ENCODE measurements at regions of chr19 and their contacts with region 1.

Region 1: DNA sequence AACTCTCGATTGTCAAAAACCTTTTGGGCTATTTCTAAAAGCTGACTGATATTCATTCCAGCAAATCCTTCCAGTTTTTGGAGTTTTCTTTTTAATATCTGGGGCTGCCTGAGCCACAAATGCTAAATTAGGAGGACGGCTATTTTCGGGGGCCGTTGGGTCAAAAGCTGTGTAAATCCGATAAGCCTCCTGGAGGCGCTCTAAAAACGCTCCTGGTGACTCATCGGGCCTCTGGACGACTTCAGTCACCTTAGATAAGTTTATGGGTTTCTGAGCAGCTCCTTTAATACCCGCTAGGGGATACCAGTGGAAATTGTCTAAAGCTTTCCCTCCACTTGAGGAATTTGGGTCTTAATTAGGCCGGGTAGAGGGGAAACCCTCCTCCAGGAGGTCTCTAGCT is 66.4 kb downstream of the ZNF730 start:
- DNase-seq: no peak
- ATAC-seq: no peak
- H3K4me3 ChIP-seq: no peak overlapping the region
- H3K4me3 Mint-ChIP-seq: no peak overlapping the region
- H3K27ac ChIP-seq: no peak overlapping the region
- H3K27ac Mint-ChIP-seq: no peak overlapping the region
- H3K4me1 ChIP-seq: no peaks in the 10 kb centered on the region
- H3K4me1 Mint-ChIP-seq: no peaks in the 10 kb centered on the region
- H3K27me3 ChIP-seq: no peaks in the 10 kb centered on the region
- H3K27me3 Mint-ChIP-seq: no peaks in the 10 kb centered on the region

Region 2: GRCh38 chr19:23054426-23054825 is 128.8 kb before region 1 on chr19:
- CTCF ChIA-PET with region 1: no interaction called
- POLR2A ChIA-PET with region 1: no interaction called
- intact Hi-C with region 1: no loop called
- DNase-seq: no peak
- ATAC-seq: no peak
- H3K4me3 ChIP-seq: no peak overlapping the region
- H3K4me3 Mint-ChIP-seq: no peak overlapping the region
- H3K27ac ChIP-seq: no peak overlapping the region
- H3K27ac Mint-ChIP-seq: no peak overlapping the region
- H3K4me1 ChIP-seq: no peaks in the 10 kb centered on the region
- H3K4me1 Mint-ChIP-seq: no peaks in the 10 kb centered on the region
- H3K27me3 ChIP-seq: no peaks in the 10 kb centered on the region
- H3K27me3 Mint-ChIP-seq: no peaks in the 10 kb centered on the region

Region 3: DNA sequence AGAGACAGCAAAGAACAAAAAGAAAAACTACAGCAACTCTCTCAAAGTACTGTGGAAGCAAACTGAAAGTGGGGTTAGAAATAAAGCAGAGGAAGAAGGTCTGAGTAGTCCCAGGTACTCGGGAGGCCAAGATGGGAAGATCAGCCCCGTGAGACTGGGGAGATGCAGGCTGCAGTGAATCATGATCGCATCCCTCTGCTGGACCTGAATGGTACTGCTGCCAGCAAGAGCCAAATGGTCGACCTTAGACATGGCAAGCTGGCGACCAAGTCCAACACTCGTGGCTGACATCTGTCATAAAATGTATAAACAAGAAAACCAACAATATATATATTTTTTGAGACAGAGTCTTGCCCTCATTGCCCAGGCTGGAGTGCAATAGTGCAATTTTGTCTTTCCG is 100.7 kb after region 1 on chr19:
- CTCF ChIA-PET with region 1: no interaction called
- POLR2A ChIA-PET with region 1: no interaction called
- intact Hi-C with region 1: loop called in 1 of 2 experiments (anchors 1 kb)
- DNase-seq: peak; percentile 26 to 60 (median 42)
- ATAC-seq: peak; percentile 91
- H3K4me3 ChIP-seq: no peak overlapping the region
- H3K4me3 Mint-ChIP-seq: peak overlapping the region in 6 of 10 donors; percentile 2 to 61 (median 30)
- H3K27ac ChIP-seq: no peak overlapping the region
- H3K27ac Mint-ChIP-seq: peak overlapping the region in 2 of 9 donors; percentile 38 to 60
- H3K4me1 ChIP-seq: no peaks in the 10 kb centered on the region
- H3K4me1 Mint-ChIP-seq: peaks cover 3 to 35% (median 25%) of the 10 kb centered on the region in 7 donors
- H3K27me3 ChIP-seq: no peaks in the 10 kb centered on the region
- H3K27me3 Mint-ChIP-seq: peaks cover 0 to 4% (median 0%) of the 10 kb centered on the region in 5 donors

Region 4: DNA sequence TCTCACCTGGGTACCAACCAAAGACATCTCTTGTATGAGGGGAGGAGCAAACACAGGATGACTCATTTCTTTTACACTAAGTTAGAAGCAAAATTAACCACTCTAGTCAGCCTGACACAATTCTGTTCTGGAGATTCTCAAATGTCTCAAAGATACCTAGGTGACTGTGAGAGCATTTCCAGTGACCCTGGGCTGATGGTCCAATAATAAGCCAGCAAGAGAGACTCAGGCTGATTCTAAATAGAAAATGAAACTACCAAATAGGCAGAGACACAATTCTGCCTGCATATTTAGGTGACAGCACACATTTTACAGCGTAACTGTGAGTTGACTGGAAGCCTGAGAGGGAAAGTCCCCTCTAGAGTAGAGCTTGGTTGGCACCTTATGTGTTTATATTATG is 195.7 kb after region 1 on chr19:
- CTCF ChIA-PET with region 1: no interaction called
- POLR2A ChIA-PET with region 1: no interaction called
- intact Hi-C with region 1: no loop called
- DNase-seq: no peak
- ATAC-seq: peak; percentile 46
- H3K4me3 ChIP-seq: no peak overlapping the region
- H3K4me3 Mint-ChIP-seq: peak overlapping the region in 1 of 10 donors; percentile 57
- H3K27ac ChIP-seq: no peak overlapping the region
- H3K27ac Mint-ChIP-seq: no peak overlapping the region
- H3K4me1 ChIP-seq: peaks cover 0 to 5% of the 10 kb centered on the region in 2 donors
- H3K4me1 Mint-ChIP-seq: peaks cover 4 to 25% (median 10%) of the 10 kb centered on the region in 7 donors
- H3K27me3 ChIP-seq: no peaks in the 10 kb centered on the region
- H3K27me3 Mint-ChIP-seq: no peaks in the 10 kb centered on the region